ENCODE measurements at regions of chr10 and their contacts with region 1.

Region 1: DNA sequence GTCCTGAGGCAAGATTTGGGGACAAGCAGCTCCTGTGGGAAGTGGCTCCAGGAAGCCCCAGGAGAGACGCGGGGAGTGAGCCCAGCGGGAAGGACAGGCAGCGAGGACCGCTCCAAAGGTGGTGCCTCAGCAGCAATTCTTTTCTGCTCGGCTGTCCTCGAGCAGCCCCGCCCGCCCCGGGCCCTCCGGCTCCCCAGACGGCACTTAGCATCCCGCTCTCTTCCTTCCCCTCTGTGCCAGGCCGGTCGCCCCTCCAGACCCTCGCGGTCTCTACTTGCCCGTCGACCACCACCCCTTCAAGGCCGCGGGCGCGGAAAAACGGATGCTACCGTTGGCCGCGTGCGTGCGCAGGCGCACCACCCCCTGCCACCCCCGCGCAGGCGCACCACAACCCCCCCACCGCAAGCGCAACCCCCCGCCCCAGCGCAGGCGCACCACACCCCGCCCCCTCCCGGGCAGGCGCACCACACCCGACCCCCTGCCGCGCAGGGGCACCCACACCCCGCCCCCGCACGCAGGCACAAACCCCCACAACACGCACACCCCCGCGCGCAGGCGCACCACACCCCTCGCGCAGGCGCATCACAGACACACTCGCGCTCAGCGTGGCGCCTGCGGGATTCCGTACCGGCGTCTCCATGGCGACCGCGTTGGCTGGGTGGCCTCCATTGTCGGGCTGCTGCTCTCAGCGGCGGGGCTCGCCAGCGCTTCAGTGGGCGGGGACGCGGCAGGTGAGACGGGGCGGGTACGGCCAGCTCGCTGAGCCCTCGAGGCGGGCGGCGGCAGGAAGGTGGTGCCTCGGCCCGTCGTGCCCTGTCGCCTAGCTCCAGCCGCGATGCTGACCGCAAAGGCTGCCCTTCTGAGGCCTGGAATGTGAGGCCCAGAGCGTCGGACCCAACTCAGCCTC is at the start of gene LRRC27:
- DNase-seq: peak; percentile 98 to 99 (median 99)
- ATAC-seq: peak; percentile 93 to 95 (median 94)
- H3K4me3 ChIP-seq: peak within 1 kb of the TSS; percentile 72 to 94 (median 91)
- H3K27ac ChIP-seq: peak within 1 kb of the TSS; percentile 43 to 83 (median 76)
- H3K4me1 ChIP-seq: peaks cover 0 to 9% (median 0%) of the 10 kb centered on the region in 4 donors
- H3K27me3 ChIP-seq: no peaks in the 10 kb centered on the region
- CTCF ChIP-seq: no peak
- POLR2A ChIP-seq: peak; percentile 24
- total RNA-seq, gene LRRC27: 2.2 to 5.4 (median 3.2) TPM

Region 2: DNA sequence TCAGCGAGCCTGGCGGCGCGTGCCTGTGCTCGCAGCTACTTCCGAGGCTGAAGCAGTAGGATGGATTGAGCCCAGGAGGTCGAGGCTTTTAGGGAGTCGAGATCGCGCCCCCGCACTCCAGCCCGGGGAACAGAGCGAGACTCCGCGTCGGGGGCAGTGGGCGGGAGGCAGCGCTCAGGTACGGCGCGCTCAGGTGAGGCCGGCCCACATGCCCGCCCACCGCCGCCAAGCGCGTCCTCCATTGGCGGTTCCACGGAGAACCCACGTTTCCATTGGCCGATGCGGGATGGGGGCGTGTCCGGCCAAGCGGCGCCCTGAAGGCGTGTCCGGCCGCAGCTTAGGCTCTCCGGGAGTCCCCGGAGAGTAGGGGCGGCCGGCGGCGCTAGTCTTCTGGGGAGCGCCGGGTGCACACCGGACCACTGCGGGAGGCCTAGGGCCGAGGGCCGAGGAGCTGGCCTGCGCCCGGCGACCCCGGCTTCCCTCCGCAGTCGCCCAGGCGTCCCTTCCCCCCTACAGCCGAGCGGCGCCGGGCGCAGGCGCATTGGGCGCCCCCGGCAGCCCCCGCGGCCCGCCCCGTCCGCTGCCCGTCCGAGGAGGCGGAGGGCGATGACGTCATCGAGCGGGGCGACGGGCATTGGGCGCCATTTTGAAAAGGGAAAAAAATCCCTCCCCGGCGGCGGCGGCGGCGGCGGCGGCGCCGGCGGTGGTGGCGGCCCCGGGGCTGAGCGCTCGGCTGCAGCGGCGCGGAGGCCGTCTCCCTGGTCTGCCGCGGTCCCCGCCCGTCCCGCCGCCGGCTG is 431.2 kb before region 1 on chr10 and contains the start of gene PPP2R2D:
- intact Hi-C with region 1: no loop called
- DNase-seq: peak; percentile 96 to 98 (median 97)
- ATAC-seq: peak; percentile 95 to 97 (median 96)
- H3K4me3 ChIP-seq: peak within 1 kb of the TSS; percentile 88 to 96 (median 90)
- H3K27ac ChIP-seq: peak within 1 kb of the TSS; percentile 95 to 98 (median 97)
- H3K4me1 ChIP-seq: peaks cover 0 to 30% (median 8%) of the 10 kb centered on the region in 4 donors
- H3K27me3 ChIP-seq: no peaks in the 10 kb centered on the region
- CTCF ChIP-seq: no peak
- POLR2A ChIP-seq: peak; percentile 85
- total RNA-seq, gene PPP2R2D: 10.9 to 16.6 (median 14.3) TPM

Region 3: DNA sequence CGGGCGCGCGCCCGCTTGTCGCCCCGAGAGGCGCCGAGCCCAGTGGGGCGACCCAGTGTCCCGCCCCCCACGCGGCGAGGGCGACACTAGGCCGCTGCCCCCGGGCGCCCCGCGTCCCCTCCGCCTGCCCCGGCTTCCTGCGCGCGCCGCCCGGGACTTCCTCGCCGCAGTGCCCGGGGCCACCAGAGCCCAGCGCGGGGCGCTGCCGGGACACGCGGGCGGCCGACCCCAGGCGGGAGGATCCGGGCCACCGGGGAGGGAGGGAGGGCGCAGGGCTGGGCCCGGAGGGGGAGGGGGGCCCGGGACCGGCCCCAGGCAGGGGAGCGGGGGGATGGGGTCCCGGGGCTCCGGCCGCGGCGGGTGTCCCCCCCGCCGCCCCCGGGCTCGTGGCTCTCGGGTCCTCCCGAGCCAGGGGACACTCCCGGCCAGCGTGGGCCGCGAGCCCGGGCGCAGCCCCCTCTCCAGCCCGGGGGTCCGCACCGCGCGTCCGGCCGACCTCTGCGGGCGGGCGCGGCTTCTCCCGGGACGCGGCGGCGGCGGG is 64.8 kb after region 1 on chr10:
- intact Hi-C with region 1: loop called in 1 of 2 experiments (anchors 10 kb)
- DNase-seq: peak in 2 of 3 donors; percentile 70 to 72
- ATAC-seq: peak; percentile 28 to 50 (median 40)
- H3K4me3 ChIP-seq: peak overlapping the region; percentile 49 to 66 (median 50)
- H3K27ac ChIP-seq: peak overlapping the region; percentile 84 to 89 (median 87)
- H3K4me1 ChIP-seq: peaks cover 0 to 10% (median 3%) of the 10 kb centered on the region in 4 donors
- H3K27me3 ChIP-seq: no peaks in the 10 kb centered on the region
- CTCF ChIP-seq: peak in 3 of 4 donors; percentile 9 to 39 (median 24)
- POLR2A ChIP-seq: no peak

Region 4: GRCh38 chr10:132429856-132430255 is 98.1 kb after region 1 on chr10:
- intact Hi-C with region 1: no loop called
- DNase-seq: no peak
- ATAC-seq: no peak
- H3K4me3 ChIP-seq: no peak overlapping the region
- H3K27ac ChIP-seq: no peak overlapping the region
- H3K4me1 ChIP-seq: no peaks in the 10 kb centered on the region
- H3K27me3 ChIP-seq: no peaks in the 10 kb centered on the region
- CTCF ChIP-seq: no peak
- POLR2A ChIP-seq: no peak